HEK293 (cell line): ENCODE measurements at regions of chr1 and their contacts with region 1.

Region 1: DNA sequence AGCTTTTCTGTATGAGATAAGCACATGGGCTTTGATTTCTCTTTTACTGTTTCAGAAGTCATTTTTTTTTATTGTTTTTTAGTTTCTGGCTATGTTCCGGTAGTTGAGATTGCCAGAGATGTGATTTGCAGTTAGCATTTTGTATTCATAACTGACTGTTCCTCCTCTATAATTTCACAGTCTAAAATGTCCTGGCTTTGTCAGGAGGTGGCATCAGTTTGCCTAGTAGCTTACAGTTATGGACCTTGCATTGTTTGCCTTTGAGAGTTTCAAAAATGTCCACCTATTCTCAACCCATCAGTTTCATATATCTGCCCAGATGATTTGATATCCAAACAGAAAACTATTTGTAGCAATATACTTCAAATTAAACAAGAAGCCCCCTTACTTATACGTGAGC is 39.5 kb upstream of the ST6GALNAC3 start:
- H3K4me3 ChIP-seq: no peak overlapping the region
- H3K27ac ChIP-seq: no peak overlapping the region
- H3K4me1 ChIP-seq: peaks cover 5% of the 10 kb centered on the region
- CTCF ChIP-seq: no peak

Region 2: GRCh38 chr1:76023669-76024435 is 11.2 kb before region 1 on chr1:
- CTCF ChIA-PET with region 1: interaction called, 10 read pairs
- POLR2A ChIA-PET with region 1: no interaction called
- H3K4me3 ChIP-seq: no peak overlapping the region
- H3K27ac ChIP-seq: no peak overlapping the region
- H3K4me1 ChIP-seq: peaks cover 4% of the 10 kb centered on the region; the same call in 1 of the 2 replicates
- CTCF ChIP-seq: no peak

Region 3: DNA sequence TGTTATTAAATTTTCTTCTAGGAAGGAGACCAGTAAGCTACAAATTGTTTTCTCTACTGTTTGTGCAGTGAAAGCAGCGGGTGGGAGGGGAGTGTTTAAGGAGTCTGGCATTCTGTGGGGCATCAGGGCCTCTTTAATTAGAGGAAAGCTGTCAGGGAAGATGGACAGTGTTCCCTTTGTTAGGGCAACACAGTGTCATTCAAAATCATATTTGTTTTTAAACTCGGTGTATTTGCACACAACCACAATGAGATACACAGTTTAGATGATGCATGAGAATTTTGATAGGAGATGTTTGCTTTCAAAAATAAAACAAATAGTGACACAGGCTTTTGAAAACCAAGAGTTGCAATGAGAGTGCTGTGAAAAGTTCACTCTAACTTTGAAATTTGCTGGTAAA is 24.4 kb after region 1 on chr1:
- CTCF ChIA-PET with region 1: no interaction called
- POLR2A ChIA-PET with region 1: no interaction called
- H3K4me3 ChIP-seq: no peak overlapping the region
- H3K27ac ChIP-seq: no peak overlapping the region
- H3K4me1 ChIP-seq: peaks cover 8% of the 10 kb centered on the region; the same call in 1 of the 2 replicates
- CTCF ChIP-seq: no peak